Astrocyte of the cerebellum (primary cell): ENCODE measurements at regions of chr2 and their contacts with region 1.

Region 1: DNA sequence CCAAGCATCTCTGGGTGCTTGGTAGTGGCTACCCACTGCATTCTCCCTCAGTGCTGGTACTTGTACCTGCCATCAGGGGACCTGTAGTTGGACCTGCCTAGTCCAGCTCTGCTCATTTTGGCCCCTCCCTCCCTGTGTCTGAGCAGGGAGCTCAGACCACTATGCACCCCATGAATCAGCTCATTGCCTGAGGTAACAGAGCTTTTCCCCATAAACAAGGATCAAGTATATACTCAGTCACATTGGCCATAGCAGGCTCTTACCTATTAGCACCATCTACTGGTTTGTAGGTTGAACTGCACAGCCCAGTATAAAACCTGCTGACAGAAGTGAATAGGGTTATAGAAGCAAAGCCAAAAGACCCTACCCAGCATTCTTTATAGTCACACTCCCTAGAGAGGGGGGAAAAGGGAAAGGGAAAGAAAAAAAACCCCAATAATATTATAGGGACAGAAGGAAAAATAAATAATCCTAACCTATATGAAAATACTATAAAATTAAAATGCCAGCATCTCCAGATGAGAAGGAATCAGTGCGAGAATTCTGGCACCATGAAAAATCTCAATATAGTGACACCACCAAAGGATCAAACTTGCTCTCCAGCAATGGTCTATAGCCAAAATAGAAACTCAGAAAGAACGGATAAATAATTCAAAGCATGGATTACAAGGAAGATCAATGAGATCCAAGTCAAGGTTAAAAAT is 6.9 kb upstream of the FLACC1 start:
- DNase-seq: peak; percentile 22
- H3K4me3 ChIP-seq: no peak overlapping the region
- CTCF ChIP-seq: peak; percentile 91

Region 2: GRCh38 chr2:201257956-201258665 is 105.9 kb before region 1 on chr2:
- in situ Hi-C with region 1: loop called (anchors 10 kb)
- DNase-seq: peak; percentile 57
- H3K4me3 ChIP-seq: peak overlapping the region; percentile 68
- CTCF ChIP-seq: no peak

Region 3: GRCh38 chr2:201523506-201523905 is 159.5 kb after region 1 on chr2:
- in situ Hi-C with region 1: loop called (anchors 10 kb)
- DNase-seq: no peak
- H3K4me3 ChIP-seq: no peak overlapping the region
- CTCF ChIP-seq: no peak